Heart left ventricle (tissue), 16 donors: ENCODE measurements at regions of chr18 and their contacts with region 1.

Region 1: GRCh38 chr18:2564373-2564772 is 6.9 kb downstream of the METTL4 start:
- DNase-seq: no peak
- ATAC-seq: no peak
- H3K4me3 ChIP-seq: no peak overlapping the region
- H3K27ac ChIP-seq: no peak overlapping the region
- H3K4me1 ChIP-seq: peaks cover 0 to 3% (median 0%) of the 10 kb centered on the region in 12 donors
- H3K27me3 ChIP-seq: no peaks in the 10 kb centered on the region
- CTCF ChIP-seq: no peak
- POLR2A ChIP-seq: no peak

Region 2: DNA sequence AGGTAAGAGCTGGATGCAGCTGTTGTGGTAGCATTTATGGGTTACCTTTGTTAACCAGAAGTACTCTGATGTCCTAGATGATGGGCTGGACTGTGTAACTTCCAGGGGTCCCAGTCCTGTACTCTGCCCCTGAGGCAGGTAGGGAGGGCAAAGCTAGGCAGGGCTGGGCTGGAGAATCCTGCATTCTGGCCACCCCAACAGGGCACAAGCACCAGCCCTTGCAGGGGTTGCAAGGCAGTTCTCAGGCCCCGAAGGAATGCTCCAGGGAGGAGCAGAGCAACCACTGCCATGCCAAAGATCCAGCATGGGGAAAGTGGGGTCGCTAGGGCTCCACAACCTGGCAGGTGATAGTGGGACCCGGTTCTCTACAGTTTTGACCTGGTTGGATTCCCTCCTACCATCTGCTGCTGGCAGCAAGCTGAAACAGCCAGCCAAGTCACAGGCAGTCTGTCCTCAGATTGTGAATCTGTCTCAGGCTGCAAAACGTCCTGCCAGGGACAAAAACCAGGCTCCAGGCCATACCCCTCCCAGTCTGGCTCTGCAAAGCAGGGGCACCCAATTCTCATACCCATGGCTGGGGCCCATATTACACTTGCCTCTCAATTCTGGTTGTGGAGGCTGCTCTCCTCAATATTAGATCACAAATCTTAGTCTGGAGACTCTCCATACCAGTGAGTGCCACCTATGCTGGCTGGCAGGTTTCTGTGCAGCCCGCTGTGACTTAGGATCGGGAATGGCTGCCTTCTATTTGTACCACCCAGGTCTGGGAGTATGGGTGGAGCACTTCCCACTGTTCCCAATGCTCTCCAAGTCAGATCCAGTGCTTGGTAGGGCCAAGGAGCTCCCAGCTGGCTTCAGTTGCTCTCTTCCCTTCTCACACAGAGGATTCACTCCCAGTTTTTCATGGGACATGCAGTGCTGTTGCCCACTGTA is 152.3 kb after region 1 on chr18:
- intact Hi-C with region 1: loop called in 1 of 10 experiments (anchors 10 kb)
- DNase-seq: peak in 4 of 5 donors; percentile 17 to 55 (median 44)
- ATAC-seq: peak; percentile 84 to 94 (median 92)
- H3K4me3 ChIP-seq: no peak overlapping the region
- H3K27ac ChIP-seq: peak overlapping the region in 10 of 12 donors; percentile 6 to 61 (median 52)
- H3K4me1 ChIP-seq: peaks cover 0 to 28% (median 9%) of the 10 kb centered on the region in 12 donors
- H3K27me3 ChIP-seq: no peaks in the 10 kb centered on the region
- CTCF ChIP-seq: no peak
- POLR2A ChIP-seq: no peak